ENCODE measurements at regions of chr2 and their contacts with region 1.

Region 1: GRCh38 chr2:102355526-102356380 is at the start of gene IL18R1:
- DNase-seq: peak; percentile 37 to 94
- H3K4me3 ChIP-seq: peak within 1 kb of the TSS; percentile 63
- CTCF ChIP-seq: no peak
- POLR2A ChIP-seq: no peak
- total RNA-seq, gene IL18R1: 1.6 to 3.6 (median 2.6) TPM

Region 2: DNA sequence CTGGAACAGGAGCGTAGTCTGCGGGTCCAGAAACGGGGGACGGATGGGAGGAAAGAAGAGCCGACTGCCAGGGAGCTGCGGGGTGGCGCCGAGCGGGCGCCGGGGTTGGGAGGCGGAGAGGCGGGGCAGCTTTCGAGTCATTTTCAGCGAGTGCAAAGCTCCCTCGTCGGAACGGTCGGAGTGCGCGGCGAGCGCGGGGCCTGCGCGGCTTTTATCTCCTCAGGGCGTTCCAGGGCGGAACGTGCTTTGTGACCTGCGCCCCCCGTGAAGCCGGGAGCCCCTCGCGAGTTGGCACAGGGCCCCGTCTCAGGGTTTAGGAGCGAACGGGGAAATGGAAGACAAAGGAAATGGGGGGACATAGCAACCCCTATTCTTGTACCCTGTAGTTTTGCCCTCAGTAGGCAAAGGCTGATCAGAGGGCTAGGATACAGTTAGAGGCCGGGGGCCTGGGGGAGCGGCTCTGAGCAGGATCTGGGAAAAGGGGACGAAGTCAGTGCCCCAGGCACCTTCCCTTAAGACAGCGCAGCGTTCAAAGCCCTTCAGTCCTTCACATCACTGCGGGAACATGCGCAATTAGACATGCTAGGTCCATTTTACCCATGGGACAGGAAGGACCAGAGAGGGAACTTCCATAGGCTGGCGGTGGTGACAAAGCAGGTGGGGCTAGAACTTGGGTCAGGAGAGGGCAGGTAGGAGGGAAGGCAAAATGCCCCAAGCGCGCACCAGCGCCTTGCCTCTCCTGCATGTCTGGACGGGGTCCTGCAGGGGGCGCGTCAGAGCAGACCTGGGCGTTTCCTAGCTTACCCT is 104.5 kb before region 1 on chr2:
- intact Hi-C with region 1: loop called (anchors 10 kb)
- DNase-seq: peak in 1 of 2 donors; percentile 92
- H3K4me3 ChIP-seq: no peak overlapping the region
- CTCF ChIP-seq: no peak
- POLR2A ChIP-seq: no peak

Measured in lower leg skin (tissue), 4 donors.